Colonic mucosa (tissue), 4 donors: ENCODE measurements at regions of chr17 and their contacts with region 1.

Region 1: GRCh38 chr17:64599187-64599676 is 62.9 kb downstream of the SMURF2 start:
- DNase-seq: no peak
- H3K4me3 ChIP-seq: no peak overlapping the region
- H3K27ac ChIP-seq: no peak overlapping the region
- H3K4me1 ChIP-seq: no peaks in the 10 kb centered on the region
- H3K27me3 ChIP-seq: no peaks in the 10 kb centered on the region
- CTCF ChIP-seq: no peak

Region 2: GRCh38 chr17:64547319-64547718 is 51.9 kb before region 1 on chr17:
- intact Hi-C with region 1: no loop called
- DNase-seq: no peak
- H3K4me3 ChIP-seq: no peak overlapping the region
- H3K27ac ChIP-seq: no peak overlapping the region
- H3K4me1 ChIP-seq: no peaks in the 10 kb centered on the region
- H3K27me3 ChIP-seq: no peaks in the 10 kb centered on the region
- CTCF ChIP-seq: no peak

Region 3: DNA sequence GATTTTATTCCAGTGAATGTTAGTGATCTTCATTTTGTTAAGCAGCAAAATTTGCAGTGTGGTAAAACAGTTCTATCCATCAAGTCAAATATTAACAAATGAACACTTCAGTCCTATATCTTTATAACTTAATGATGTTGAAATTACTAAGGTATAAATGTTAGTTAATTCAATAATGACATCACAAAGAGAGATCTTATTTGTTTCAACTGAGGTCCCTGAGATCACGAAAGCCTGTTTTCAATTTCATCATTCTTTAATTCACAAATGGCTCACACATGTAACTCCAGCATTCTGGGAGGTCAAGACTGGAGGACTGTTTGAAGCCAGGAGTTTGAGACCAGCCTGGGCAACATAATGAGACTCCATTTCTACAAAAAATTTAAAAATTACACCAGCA is 49.0 kb after region 1 on chr17:
- intact Hi-C with region 1: loop called (anchors 10 kb)
- DNase-seq: no peak
- H3K4me3 ChIP-seq: no peak overlapping the region
- H3K27ac ChIP-seq: no peak overlapping the region
- H3K4me1 ChIP-seq: no peaks in the 10 kb centered on the region
- H3K27me3 ChIP-seq: no peaks in the 10 kb centered on the region
- CTCF ChIP-seq: no peak